ENCODE measurements at regions of chr14 and their contacts with region 1.

Region 1: DNA sequence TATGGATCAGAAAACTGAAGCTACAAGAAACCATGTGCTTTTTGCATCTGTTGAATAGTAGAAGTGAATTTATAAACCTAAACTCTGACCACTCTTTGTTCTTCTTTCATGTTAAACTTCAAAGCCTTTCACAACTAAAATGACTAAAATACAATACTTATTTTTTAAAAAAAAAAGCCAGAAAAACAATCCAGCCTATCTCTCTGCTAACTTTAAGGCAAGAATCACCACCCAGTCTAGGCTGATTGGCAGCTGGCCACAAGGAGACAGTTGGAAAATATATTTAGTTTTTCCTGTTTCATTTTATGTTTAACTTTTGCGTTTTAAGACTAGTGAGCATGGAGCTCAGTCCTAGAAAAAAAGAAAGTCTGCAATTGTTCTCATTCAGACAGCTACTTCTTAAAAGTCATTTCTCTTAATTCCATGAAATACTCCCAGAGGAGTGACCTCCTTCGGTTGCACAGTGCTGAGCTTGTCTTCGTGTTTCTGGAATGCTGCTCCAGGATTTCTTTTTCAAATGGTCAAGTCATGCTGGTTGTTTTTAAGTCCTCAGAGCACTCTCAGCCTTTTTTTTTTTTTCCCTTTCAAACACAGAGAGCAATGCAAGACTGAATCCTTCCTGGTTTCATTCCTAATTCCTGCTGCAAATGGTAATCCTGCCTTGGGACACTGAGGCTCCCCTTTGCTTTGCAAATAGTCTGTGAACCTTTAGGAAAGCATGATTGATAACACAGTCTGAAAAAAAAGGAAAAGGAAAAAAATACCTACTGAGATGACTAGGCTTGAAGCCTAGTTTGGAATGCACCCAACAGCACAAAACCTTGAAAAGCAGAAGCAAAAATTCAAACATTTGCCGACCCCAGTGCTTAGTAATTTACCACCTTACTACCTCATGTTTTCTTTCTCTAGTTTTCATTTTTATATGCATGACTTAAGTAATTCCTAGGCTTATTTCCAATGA is 233.3 kb upstream of the DAAM1 start:
- DNase-seq: no peak
- H3K4me3 ChIP-seq: no peak overlapping the region
- H3K27ac ChIP-seq: no peak overlapping the region
- H3K4me1 ChIP-seq: no peaks in the 10 kb centered on the region
- H3K27me3 ChIP-seq: no peaks in the 10 kb centered on the region
- CTCF ChIP-seq: no peak
- POLR2A ChIP-seq: no peak

Region 2: DNA sequence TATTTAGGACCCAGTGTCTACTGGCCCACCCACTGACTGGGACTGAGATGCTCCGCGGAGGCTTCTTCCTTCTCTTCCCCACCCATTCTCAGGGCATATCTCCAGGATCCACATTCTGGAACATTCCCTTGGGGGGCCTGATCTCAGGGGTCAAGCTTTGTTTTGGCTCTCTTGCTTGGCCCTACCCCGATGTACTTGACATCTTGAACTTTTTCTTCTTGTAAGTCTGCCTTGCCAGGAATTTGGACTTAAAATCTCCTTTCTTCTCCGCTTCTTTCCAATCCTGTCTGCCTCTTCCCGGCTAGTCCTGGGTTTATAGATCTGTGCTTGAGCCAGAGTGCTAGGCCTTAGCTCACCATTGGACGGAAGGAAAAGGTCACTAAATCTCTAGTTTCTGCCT is 295.3 kb before region 1 on chr14:
- intact Hi-C with region 1: loop called (anchors 10 kb)
- DNase-seq: no peak
- H3K4me3 ChIP-seq: no peak overlapping the region
- H3K27ac ChIP-seq: peak overlapping the region in 1 of 2 donors; percentile 39
- H3K4me1 ChIP-seq: no peaks in the 10 kb centered on the region
- H3K27me3 ChIP-seq: no peaks in the 10 kb centered on the region
- CTCF ChIP-seq: no peak
- POLR2A ChIP-seq: no peak

Region 3: GRCh38 chr14:58671436-58671835 is 283.7 kb before region 1 on chr14:
- intact Hi-C with region 1: no loop called
- DNase-seq: no peak
- H3K4me3 ChIP-seq: no peak overlapping the region
- H3K27ac ChIP-seq: no peak overlapping the region
- H3K4me1 ChIP-seq: no peaks in the 10 kb centered on the region
- H3K27me3 ChIP-seq: no peaks in the 10 kb centered on the region
- CTCF ChIP-seq: no peak
- POLR2A ChIP-seq: no peak

Region 4: DNA sequence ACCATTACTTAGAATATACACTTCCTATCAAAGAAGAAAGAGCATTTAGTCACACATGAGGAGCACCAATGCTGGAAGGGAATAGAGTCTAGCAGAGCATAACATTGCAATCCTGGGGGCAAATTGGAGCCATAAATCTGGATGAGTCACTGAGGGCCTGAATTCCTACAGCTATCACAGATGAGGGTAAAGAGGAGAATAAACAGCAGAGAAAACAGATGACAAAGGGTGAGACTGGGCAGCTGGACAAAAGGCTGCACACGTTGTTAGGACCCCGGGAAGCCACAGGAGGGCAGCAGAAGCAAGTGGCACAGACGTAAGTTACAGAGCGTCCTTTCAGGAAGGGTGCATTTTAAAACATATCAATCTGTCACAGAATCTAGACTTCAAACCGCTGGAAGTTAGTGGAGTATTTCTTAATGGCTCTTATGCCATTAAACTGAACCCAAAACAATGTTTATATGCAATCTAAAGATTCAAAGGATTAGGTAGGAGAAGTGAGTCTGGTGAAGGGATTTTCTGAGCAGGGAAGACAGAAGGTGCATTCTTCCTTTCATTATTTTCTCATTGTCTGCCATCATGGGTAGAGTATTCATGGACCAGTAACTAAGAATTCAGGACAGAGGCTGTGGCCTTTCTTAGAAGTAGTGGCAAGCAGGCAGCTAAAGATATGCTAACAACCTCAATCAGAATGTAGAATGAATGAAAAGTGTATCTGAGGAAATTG is 73.5 kb after region 1 on chr14:
- intact Hi-C with region 1: no loop called
- DNase-seq: no peak
- H3K4me3 ChIP-seq: no peak overlapping the region
- H3K27ac ChIP-seq: no peak overlapping the region
- H3K4me1 ChIP-seq: no peaks in the 10 kb centered on the region
- H3K27me3 ChIP-seq: no peaks in the 10 kb centered on the region
- CTCF ChIP-seq: peak in 2 of 3 donors; percentile 57 to 72
- POLR2A ChIP-seq: no peak